ENCODE measurements at regions of chr3 and their contacts with region 1.

Region 1: DNA sequence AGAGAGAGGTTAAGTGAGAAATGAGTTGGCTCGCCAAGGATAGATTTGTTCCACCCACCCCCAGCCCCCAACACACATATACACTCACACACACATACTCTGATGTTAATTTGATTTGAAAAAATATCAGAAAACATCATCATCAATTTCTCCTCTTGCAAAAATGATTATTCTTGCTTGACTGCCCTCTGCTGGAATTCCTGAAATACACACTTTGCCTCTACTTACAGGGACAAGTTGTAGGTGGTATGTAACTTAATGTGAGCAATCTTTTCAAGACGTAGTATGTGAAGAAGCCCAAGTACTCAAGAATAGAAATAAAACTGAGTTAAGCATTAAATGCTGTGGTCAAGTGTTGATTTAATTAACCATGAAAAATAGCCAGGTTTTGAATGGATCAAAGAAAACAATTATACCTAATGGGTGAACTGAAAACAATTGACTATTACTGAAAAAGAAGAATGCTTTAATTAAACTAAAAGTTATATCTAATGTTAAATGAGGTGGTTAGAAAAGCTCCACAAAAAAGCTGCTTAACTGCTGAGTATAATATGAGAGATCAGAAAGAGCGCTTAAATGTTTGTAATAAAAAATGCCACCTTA is 46.6 kb upstream of the MDFIC2 start:
- DNase-seq: peak in 1 of 2 experiments; percentile 41
- H3K4me3 ChIP-seq: no peak overlapping the region
- H3K4me3 Mint-ChIP-seq: no peak overlapping the region
- H3K27ac Mint-ChIP-seq: no peak overlapping the region
- H3K4me1 ChIP-seq: no peaks in the 10 kb centered on the region
- H3K4me1 Mint-ChIP-seq: no peaks in the 10 kb centered on the region
- H3K27me3 ChIP-seq: no peaks in the 10 kb centered on the region
- H3K27me3 Mint-ChIP-seq: peaks cover 6% of the 10 kb centered on the region
- CTCF ChIP-seq: peak; percentile 47 to 67

Region 2: GRCh38 chr3:70064194-70064779 is 294.8 kb before region 1 on chr3:
- CTCF ChIA-PET with region 1: no interaction called
- POLR2A ChIA-PET with region 1: no interaction called
- intact Hi-C with region 1: loop called (anchors 1 kb)
- DNase-seq: peak in 1 of 2 experiments; percentile 28
- H3K4me3 ChIP-seq: no peak overlapping the region
- H3K4me3 Mint-ChIP-seq: no peak overlapping the region
- H3K27ac Mint-ChIP-seq: no peak overlapping the region
- H3K4me1 ChIP-seq: no peaks in the 10 kb centered on the region
- H3K4me1 Mint-ChIP-seq: no peaks in the 10 kb centered on the region
- H3K27me3 ChIP-seq: no peaks in the 10 kb centered on the region
- H3K27me3 Mint-ChIP-seq: peaks cover 8% of the 10 kb centered on the region
- CTCF ChIP-seq: peak; percentile 60 to 61

Region 3: GRCh38 chr3:70090322-70090913 is 268.7 kb before region 1 on chr3:
- CTCF ChIA-PET with region 1: no interaction called
- POLR2A ChIA-PET with region 1: no interaction called
- intact Hi-C with region 1: loop called (anchors 1 kb)
- DNase-seq: no peak
- H3K4me3 ChIP-seq: no peak overlapping the region
- H3K4me3 Mint-ChIP-seq: no peak overlapping the region
- H3K27ac Mint-ChIP-seq: no peak overlapping the region
- H3K4me1 ChIP-seq: no peaks in the 10 kb centered on the region
- H3K4me1 Mint-ChIP-seq: no peaks in the 10 kb centered on the region
- H3K27me3 ChIP-seq: no peaks in the 10 kb centered on the region; the same call in 1 of the 2 replicates
- H3K27me3 Mint-ChIP-seq: peaks cover 7% of the 10 kb centered on the region
- CTCF ChIP-seq: peak; percentile 47 to 61

Region 4: DNA sequence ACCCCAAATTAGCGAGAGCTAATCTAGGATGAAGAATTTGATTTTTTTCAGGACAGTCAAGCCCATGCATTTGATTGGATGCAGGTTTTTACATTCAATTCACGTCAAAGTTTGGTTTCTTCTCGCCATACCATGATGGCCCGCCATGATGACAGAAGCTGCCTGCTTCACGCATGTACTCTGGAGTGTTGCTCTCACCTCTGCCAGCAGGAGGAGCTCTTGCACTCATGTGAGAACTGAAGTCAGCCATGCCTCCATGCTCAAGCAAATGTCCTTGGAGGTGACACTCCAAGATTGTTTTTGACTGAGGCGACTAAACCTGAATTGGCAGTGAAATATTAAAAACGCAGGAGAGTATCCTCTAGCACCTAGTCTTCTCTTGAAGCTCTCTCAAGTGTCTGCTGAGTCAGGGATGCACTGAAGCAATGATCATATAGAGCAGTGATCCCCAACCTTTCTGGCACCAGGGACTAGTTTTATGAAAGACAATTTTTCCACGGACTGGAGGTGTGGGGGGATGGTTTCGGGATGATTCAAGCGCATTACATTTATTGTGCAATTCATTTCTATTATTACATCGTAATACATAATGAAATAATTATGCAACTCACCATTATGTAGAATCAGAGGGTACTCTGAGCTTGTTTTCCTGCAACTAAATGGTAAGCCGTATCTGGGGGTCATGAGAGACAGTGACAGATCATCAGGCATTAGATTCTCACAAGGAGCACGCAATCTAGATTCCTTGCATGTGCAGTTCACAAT is 238.5 kb before region 1 on chr3:
- CTCF ChIA-PET with region 1: no interaction called
- POLR2A ChIA-PET with region 1: no interaction called
- intact Hi-C with region 1: loop called (anchors 1 kb)
- DNase-seq: peak; percentile 77
- H3K4me3 ChIP-seq: no peak overlapping the region
- H3K4me3 Mint-ChIP-seq: no peak overlapping the region
- H3K27ac Mint-ChIP-seq: no peak overlapping the region
- H3K4me1 ChIP-seq: no peaks in the 10 kb centered on the region
- H3K4me1 Mint-ChIP-seq: no peaks in the 10 kb centered on the region
- H3K27me3 ChIP-seq: no peaks in the 10 kb centered on the region
- H3K27me3 Mint-ChIP-seq: peaks cover 6% of the 10 kb centered on the region
- CTCF ChIP-seq: peak; percentile 68 to 69

Region 5: DNA sequence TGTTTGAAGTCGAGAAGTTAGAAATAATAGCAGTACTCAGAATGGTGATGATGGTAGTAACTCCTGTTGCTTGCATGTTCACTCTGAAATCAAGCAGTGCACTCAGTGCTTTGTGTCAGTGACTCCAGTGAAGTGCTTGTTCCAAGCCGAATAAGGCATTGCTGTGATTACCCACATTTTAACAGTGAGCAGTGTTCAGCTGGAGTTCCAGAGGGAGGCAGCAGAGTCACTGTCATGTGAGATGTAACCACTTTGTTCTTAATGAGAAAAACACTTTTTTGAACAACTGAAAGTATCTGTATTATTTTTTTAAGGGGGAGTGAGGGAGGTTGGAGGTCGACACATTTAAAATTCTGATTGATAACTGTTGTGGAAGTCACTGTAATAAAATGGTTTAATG is 50.3 kb before region 1 on chr3:
- CTCF ChIA-PET with region 1: no interaction called
- POLR2A ChIA-PET with region 1: no interaction called
- intact Hi-C with region 1: loop called (anchors 2 kb)
- DNase-seq: peak in 1 of 2 experiments; percentile 25
- H3K4me3 ChIP-seq: no peak overlapping the region
- H3K4me3 Mint-ChIP-seq: no peak overlapping the region
- H3K27ac Mint-ChIP-seq: no peak overlapping the region
- H3K4me1 ChIP-seq: no peaks in the 10 kb centered on the region
- H3K4me1 Mint-ChIP-seq: no peaks in the 10 kb centered on the region
- H3K27me3 ChIP-seq: no peaks in the 10 kb centered on the region
- H3K27me3 Mint-ChIP-seq: peaks cover 7% of the 10 kb centered on the region
- CTCF ChIP-seq: peak in 1 of 2 experiments; percentile 22